ENCODE measurements at regions of chr9 and their contacts with region 1.

Region 1: GRCh38 chr9:91433180-91433579 is 9.5 kb upstream of the NFIL3 start:
- DNase-seq: peak; percentile 88
- H3K4me3 Mint-ChIP-seq: no peak overlapping the region
- H3K27ac Mint-ChIP-seq: no peak overlapping the region
- H3K4me1 Mint-ChIP-seq: peaks cover 27% of the 10 kb centered on the region
- H3K27me3 Mint-ChIP-seq: no peaks in the 10 kb centered on the region
- CTCF ChIP-seq: peak; percentile 45

Region 2: GRCh38 chr9:90929626-90930025 is 503.6 kb before region 1 on chr9:
- CTCF ChIA-PET with region 1: no interaction called
- POLR2A ChIA-PET with region 1: no interaction called
- intact Hi-C with region 1: no loop called
- DNase-seq: no peak
- H3K4me3 Mint-ChIP-seq: no peak overlapping the region
- H3K27ac Mint-ChIP-seq: no peak overlapping the region
- H3K4me1 Mint-ChIP-seq: peaks cover 15% of the 10 kb centered on the region
- H3K27me3 Mint-ChIP-seq: no peaks in the 10 kb centered on the region
- CTCF ChIP-seq: no peak

Region 3: GRCh38 chr9:90985631-90986030 is 447.5 kb before region 1 on chr9:
- CTCF ChIA-PET with region 1: interaction called, 4 read pairs
- POLR2A ChIA-PET with region 1: interaction called, 10 read pairs
- intact Hi-C with region 1: no loop called
- DNase-seq: no peak
- H3K4me3 Mint-ChIP-seq: no peak overlapping the region
- H3K27ac Mint-ChIP-seq: peak overlapping the region; percentile 89
- H3K4me1 Mint-ChIP-seq: peaks cover 38% of the 10 kb centered on the region
- H3K27me3 Mint-ChIP-seq: no peaks in the 10 kb centered on the region
- CTCF ChIP-seq: no peak

Region 4: DNA sequence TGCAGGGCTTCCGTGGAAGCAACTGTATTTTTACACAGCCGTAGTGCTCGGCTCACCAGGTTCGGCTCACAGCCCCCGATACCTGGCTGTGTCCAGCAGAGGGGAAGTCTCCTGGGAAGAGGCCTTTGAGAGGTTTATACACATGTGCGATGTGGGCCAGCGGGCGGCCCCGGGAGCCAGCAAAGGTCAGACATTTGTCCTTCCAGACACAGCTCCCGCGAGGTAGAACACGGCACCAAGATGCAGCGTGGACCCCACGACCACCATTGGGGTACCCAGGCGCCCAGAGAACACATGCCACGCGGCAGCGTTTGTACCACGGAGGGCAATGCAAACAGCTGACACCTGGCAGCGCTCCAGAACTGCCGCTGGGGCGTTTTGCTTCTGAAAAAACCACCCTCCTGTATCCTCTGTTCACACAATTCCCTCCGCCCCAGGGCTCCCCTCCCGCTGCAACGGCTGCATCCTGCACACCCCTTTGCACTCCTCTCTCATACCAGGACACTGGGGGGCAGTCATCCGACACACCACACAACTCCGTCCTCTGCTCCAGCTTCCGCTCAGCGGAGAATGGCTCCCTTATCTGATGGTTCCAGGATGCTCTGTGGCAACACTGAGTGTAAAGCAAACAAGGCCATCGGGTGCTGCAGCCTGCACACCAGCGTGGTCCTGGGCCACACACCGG is 396.2 kb before region 1 on chr9:
- CTCF ChIA-PET with region 1: no interaction called
- POLR2A ChIA-PET with region 1: no interaction called
- intact Hi-C with region 1: loop called (anchors 2 kb)
- DNase-seq: peak; percentile 87
- H3K4me3 Mint-ChIP-seq: no peak overlapping the region
- H3K27ac Mint-ChIP-seq: no peak overlapping the region
- H3K4me1 Mint-ChIP-seq: peaks cover 24% of the 10 kb centered on the region
- H3K27me3 Mint-ChIP-seq: no peaks in the 10 kb centered on the region
- CTCF ChIP-seq: peak; percentile 28

Region 5: DNA sequence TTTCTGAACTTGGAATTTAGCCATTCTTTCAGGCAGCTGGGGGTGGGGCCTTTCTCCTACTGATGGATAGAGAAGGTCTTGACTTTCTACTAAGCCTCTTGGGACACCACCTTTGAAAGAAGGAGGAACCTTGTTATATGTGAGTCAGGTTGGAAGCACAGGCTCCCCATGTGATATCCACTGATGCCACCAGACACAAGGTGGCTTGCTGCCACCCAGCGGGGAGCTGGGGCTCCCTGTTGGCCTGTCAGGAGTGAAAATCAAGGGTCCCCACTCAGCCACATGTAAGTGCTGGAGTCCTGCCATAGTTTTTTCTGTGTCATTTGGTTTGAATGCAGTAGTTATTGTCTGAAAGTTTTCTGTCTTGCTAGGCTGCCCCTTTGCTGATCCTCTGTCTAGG is 242.9 kb after region 1 on chr9:
- CTCF ChIA-PET with region 1: no interaction called
- POLR2A ChIA-PET with region 1: interaction called, 3 read pairs
- intact Hi-C with region 1: loop called (anchors 2 kb)
- DNase-seq: peak; percentile 65
- H3K4me3 Mint-ChIP-seq: no peak overlapping the region
- H3K27ac Mint-ChIP-seq: peak overlapping the region; percentile 63
- H3K4me1 Mint-ChIP-seq: no peaks in the 10 kb centered on the region
- H3K27me3 Mint-ChIP-seq: no peaks in the 10 kb centered on the region
- CTCF ChIP-seq: peak; percentile 27

Region 6: DNA sequence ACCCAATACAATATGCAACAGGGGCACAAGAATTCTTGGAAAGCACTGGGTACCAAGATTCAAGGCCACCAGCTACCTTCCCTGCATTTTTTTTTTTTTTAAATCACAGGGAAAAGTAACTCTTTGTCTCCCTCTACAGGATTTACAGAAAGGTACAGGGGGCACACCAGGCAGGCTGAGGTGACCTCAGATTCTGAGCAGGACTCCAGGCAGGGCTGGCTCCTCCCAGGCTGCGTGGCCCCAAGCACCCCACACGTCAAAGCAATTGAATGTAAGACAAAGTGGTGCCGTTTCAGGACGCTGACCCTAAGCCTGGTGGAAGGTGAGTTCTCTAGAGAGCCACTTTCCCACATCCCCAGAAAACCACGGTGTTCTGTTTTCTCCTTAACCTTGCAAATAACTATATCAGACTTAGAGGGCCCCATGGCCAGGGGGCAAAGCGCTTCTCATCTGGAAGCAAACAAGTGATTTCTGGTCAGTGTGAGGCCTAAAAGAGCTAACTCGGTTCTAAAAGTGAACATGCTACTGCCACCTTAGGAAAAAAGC is 294.2 kb after region 1 on chr9:
- CTCF ChIA-PET with region 1: interaction called, 5 read pairs
- POLR2A ChIA-PET with region 1: interaction called, 5 read pairs
- intact Hi-C with region 1: loop called (anchors 2 kb)
- DNase-seq: peak; percentile 62
- H3K4me3 Mint-ChIP-seq: no peak overlapping the region
- H3K27ac Mint-ChIP-seq: no peak overlapping the region
- H3K4me1 Mint-ChIP-seq: peaks cover 14% of the 10 kb centered on the region
- H3K27me3 Mint-ChIP-seq: no peaks in the 10 kb centered on the region
- CTCF ChIP-seq: peak; percentile 63

Measured in MCF 10A (cell line).